ENCODE measurements at regions of chr20 and their contacts with region 1.

Region 1: GRCh38 chr20:44683263-44684046 is 31.7 kb upstream of the CCN5 start:
- DNase-seq: peak; percentile 70 to 83
- H3K4me3 ChIP-seq: no peak overlapping the region
- H3K27ac ChIP-seq: no peak overlapping the region
- H3K4me1 ChIP-seq: peaks cover 0 to 2% (median 0%) of the 10 kb centered on the region in 4 experiments; a peak in 1 of 7 replicates
- H3K27me3 ChIP-seq: peaks cover 0 to 2% (median 0%) of the 10 kb centered on the region in 4 experiments; a peak in 2 of 7 replicates
- CTCF ChIP-seq: peak; percentile 61 to 86 (median 81)
- EP300 ChIP-seq: no peak
- POLR2A ChIP-seq: no peak
- RAD21 ChIP-seq: peak; percentile 75 to 83

Region 2: DNA sequence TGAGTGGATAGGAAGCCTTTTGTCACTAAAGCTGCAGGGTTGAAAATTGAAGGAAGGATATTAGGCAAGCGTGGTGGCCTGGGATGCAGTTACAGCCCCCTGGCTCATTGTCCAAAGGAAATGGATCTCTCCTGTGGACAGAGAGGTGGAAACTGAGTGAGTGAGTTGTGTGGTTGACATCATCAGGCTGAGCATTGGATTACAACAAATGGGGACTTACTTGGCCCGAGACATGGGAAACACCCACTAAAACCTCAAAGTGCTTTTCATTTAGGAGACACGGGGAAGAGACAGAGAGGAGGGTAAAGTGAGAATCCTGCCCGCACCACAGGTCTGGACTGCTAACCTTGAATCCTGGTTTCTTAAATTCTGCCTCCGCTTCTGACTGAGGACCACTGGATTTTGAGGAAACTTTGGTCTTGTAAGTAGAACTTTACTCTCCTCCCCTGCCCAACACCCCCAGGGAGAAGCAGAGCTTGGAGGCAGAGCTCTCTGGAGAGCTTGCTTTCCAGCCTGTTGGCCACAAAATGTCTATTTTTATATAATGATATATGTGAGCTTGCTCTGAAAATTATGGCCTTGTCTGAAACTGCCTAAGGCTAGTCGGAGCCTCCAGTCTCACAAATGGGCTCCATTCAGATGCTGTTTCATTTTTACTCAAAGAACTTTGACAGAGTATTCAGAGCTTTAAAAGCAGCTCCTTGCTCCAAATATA is 101.0 kb before region 1 on chr20 and contains the start of gene PKIG:
- CTCF ChIA-PET with region 1: no interaction called
- POLR2A ChIA-PET with region 1: no interaction called
- DNase-seq: no peak
- H3K4me3 ChIP-seq: no peak within 1 kb of the TSS
- H3K27ac ChIP-seq: no peak within 1 kb of the TSS
- H3K4me1 ChIP-seq: peaks cover 7 to 17% (median 11%) of the 10 kb centered on the region in 4 experiments
- H3K27me3 ChIP-seq: no peaks in the 10 kb centered on the region
- CTCF ChIP-seq: no peak
- EP300 ChIP-seq: no peak
- POLR2A ChIP-seq: no peak
- RAD21 ChIP-seq: no peak
- total RNA-seq, gene PKIG: 25.4 and 26.7 TPM in 2 replicates

Region 3: DNA sequence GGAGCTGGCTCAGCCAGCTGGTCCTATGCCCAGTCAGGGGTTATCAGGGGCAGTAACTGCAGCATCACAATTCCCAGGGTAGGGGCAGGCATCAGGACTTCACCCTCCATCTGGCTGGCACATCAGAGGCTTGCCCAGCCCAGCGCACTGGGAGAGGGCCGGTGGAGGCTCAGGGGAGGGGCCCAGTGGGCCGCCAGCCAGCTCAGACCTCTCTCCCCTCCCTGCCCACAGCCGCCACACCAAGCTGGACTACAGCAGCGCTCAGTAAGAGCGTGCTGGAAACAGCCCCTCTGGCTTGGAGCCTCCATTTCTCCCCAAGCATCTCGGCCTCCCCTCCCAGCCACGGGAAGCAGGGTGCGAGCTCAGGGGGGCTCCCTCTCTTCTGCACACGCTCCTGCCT is 53.9 kb before region 1 on chr20:
- CTCF ChIA-PET with region 1: interaction called, 14 read pairs
- POLR2A ChIA-PET with region 1: no interaction called
- DNase-seq: no peak
- H3K4me3 ChIP-seq: no peak overlapping the region
- H3K27ac ChIP-seq: no peak overlapping the region
- H3K4me1 ChIP-seq: peaks cover 0 to 3% (median 0%) of the 10 kb centered on the region in 4 experiments; a peak in 3 of 7 replicates
- H3K27me3 ChIP-seq: no peaks in the 10 kb centered on the region
- CTCF ChIP-seq: no peak
- EP300 ChIP-seq: no peak
- POLR2A ChIP-seq: no peak
- RAD21 ChIP-seq: no peak

Region 4: GRCh38 chr20:44651684-44652423 is 31.6 kb before region 1 on chr20 and contains the start of gene ADA:
- CTCF ChIA-PET with region 1: interaction called, 83 read pairs
- POLR2A ChIA-PET with region 1: interaction called, 3 read pairs
- DNase-seq: peak in 1 of 2 experiments; percentile 82
- H3K4me3 ChIP-seq: peak within 1 kb of the TSS; percentile 52 to 93 (median 66)
- H3K27ac ChIP-seq: no peak within 1 kb of the TSS
- H3K4me1 ChIP-seq: peaks cover 9 to 21% (median 15%) of the 10 kb centered on the region in 4 experiments
- H3K27me3 ChIP-seq: peaks cover 0 to 20% (median 13%) of the 10 kb centered on the region in 4 experiments; a peak in 6 of 7 replicates
- CTCF ChIP-seq: no peak
- EP300 ChIP-seq: no peak
- POLR2A ChIP-seq: no peak
- RAD21 ChIP-seq: no peak; a peak in 1 of 4 replicates
- total RNA-seq, gene ADA: 19.5 and 19.9 TPM in 2 replicates

Region 5: DNA sequence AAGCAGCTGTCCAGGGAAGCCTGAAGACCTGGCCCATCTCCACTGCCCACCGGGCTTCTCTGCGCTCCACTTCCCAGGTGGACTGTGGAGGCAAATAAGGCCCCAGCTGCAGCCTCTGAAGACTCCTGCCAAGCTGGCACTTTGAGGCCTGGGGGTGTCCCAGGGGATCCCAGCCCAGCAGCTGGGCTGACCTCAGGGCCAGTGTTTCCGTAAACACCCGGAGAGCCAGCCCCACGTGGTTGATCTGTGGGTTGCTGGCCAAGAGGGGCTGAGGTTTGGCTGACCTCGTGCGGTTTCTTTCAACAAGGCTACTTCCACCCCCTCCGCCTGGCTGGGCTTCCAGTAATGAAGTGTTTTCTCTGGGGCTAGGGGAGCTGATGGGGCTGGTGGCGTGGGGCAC is 19.3 kb after region 1 on chr20:
- CTCF ChIA-PET with region 1: interaction called, 72 read pairs
- POLR2A ChIA-PET with region 1: interaction called, 5 read pairs
- DNase-seq: no peak
- H3K4me3 ChIP-seq: no peak overlapping the region
- H3K27ac ChIP-seq: no peak overlapping the region; the same call in 1 of the 2 replicates
- H3K4me1 ChIP-seq: peaks cover 0 to 14% (median 10%) of the 10 kb centered on the region in 4 experiments; a peak in 6 of 7 replicates
- H3K27me3 ChIP-seq: no peaks in the 10 kb centered on the region
- CTCF ChIP-seq: no peak
- EP300 ChIP-seq: no peak
- POLR2A ChIP-seq: no peak
- RAD21 ChIP-seq: no peak

Region 6: GRCh38 chr20:44733341-44734069 is 50.0 kb after region 1 on chr20:
- CTCF ChIA-PET with region 1: interaction called, 146 read pairs
- POLR2A ChIA-PET with region 1: interaction called, 12 read pairs
- DNase-seq: peak in 1 of 2 experiments; percentile 86
- H3K4me3 ChIP-seq: no peak overlapping the region
- H3K27ac ChIP-seq: no peak overlapping the region
- H3K4me1 ChIP-seq: peaks cover 3 to 13% (median 9%) of the 10 kb centered on the region in 4 experiments; a peak in 4 of 7 replicates
- H3K27me3 ChIP-seq: no peaks in the 10 kb centered on the region
- CTCF ChIP-seq: peak; percentile 90 to 97 (median 96)
- EP300 ChIP-seq: no peak
- POLR2A ChIP-seq: no peak
- RAD21 ChIP-seq: peak; percentile 98 to 99